Sigmoid colon (tissue), 7 donors: ENCODE measurements at regions of chr2 and their contacts with region 1.

Region 1: DNA sequence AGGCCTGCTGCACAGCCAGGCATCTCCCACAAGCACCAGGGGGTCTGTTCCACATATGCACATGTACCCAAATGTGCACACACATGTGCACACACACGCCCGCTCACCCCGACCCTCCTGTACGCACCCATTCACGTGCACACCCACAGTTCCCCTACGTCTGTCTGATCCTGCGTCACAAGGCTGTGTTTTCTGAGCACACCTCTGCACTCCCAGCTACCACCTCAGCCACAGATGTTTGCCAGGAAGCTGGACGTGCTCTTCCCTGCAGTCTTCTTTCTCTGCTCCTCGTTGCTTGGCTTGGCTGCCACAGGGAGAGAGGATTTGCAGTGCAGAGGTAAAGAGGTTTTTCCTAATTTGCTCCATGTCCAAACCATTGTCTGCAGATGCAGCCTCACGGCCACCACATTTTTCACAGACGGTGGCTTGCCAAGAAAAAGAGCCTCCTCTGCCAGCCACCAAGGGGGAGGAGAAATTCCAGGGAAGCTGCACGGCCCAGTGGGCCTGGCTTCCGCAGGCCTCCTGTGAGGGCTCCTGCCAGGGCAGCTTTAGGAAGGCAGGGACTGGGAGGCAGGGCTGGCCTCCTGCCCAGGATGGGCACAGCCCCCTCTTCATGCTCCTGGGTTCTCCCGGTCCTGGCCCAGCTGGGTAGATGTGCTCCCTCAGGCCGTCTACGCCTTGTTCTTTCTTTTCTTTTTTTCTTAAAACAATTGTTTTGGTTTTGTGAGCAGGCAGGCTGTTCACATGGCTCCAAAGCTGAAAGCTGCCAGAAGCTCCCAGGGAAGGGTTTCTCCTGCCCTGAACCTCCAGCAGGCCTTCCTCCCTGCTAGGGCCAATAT is 29.3 kb upstream of the HS6ST1 start:
- DNase-seq: peak; percentile 91
- H3K4me3 ChIP-seq: no peak overlapping the region
- H3K27ac ChIP-seq: peak overlapping the region; percentile 75 to 81 (median 79)
- H3K4me1 ChIP-seq: peaks cover 0 to 31% (median 29%) of the 10 kb centered on the region in 4 donors
- H3K27me3 ChIP-seq: no peaks in the 10 kb centered on the region
- CTCF ChIP-seq: no peak
- EP300 ChIP-seq: no peak
- POLR2A ChIP-seq: no peak

Region 2: GRCh38 chr2:128374001-128374710 is 26.2 kb after region 1 on chr2:
- intact Hi-C with region 1: loop called (anchors 2 kb)
- DNase-seq: no peak
- H3K4me3 ChIP-seq: no peak overlapping the region
- H3K27ac ChIP-seq: peak overlapping the region; percentile 73 to 81 (median 77)
- H3K4me1 ChIP-seq: peaks cover 0 to 71% (median 67%) of the 10 kb centered on the region in 4 donors
- H3K27me3 ChIP-seq: no peaks in the 10 kb centered on the region
- CTCF ChIP-seq: no peak
- EP300 ChIP-seq: peak in 1 of 4 donors; percentile 18
- POLR2A ChIP-seq: no peak

Region 3: DNA sequence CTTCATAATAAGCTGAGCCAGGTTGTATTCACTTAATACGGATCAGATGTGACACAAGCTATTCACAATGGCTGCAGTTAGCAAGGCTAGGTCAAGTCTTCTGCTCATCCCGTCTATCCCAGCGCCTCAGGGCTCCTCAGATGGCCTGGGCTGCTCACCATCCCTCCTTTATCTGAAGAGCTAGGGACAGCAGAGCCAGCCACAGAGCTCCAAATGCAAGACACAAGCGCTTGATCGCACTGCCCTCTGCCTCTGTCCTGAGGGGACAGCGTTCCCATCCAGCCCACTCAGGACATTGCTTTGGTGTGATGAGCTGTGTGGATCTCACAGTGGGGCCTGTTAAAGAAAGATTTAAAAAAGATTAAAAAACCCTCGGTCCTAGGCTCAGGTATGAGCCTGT is 225.2 kb after region 1 on chr2:
- intact Hi-C with region 1: no loop called
- DNase-seq: peak; percentile 37
- H3K4me3 ChIP-seq: no peak overlapping the region
- H3K27ac ChIP-seq: no peak overlapping the region
- H3K4me1 ChIP-seq: no peaks in the 10 kb centered on the region
- H3K27me3 ChIP-seq: no peaks in the 10 kb centered on the region
- CTCF ChIP-seq: no peak
- EP300 ChIP-seq: no peak
- POLR2A ChIP-seq: no peak

Region 4: GRCh38 chr2:128585706-128586105 is 237.8 kb after region 1 on chr2:
- intact Hi-C with region 1: no loop called
- DNase-seq: no peak
- H3K4me3 ChIP-seq: no peak overlapping the region
- H3K27ac ChIP-seq: no peak overlapping the region
- H3K4me1 ChIP-seq: no peaks in the 10 kb centered on the region
- H3K27me3 ChIP-seq: no peaks in the 10 kb centered on the region
- CTCF ChIP-seq: no peak
- EP300 ChIP-seq: no peak
- POLR2A ChIP-seq: no peak